ENCODE measurements at regions of chr6 and their contacts with region 1.

Region 1: DNA sequence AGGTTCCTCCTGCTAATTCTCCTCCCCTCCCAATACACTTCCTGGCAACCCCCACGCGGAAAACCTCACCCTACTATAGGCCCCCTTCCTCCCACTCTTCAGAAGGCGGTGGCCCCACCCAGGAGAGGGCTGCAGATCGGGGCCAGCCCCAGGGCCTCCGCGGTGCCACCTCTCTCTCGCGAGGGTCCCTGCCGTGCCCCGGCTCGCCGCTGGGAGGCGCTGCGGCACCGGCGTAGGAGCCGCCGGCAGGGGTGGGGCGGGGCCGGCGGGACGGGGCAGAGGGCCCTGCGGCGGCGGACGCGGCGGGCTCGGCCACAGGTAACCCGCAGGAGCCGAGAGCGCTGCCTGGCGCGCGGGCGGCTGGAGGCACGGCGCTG is at the start of gene ANKRD6:
- DNase-seq: peak in 1 of 2 experiments; percentile 81
- H3K4me3 ChIP-seq: peak within 1 kb of the TSS; percentile 36; the same call in 1 of the 2 replicates
- H3K27ac ChIP-seq: no peak within 1 kb of the TSS
- H3K4me1 ChIP-seq: no peaks in the 10 kb centered on the region
- H3K27me3 ChIP-seq: no peaks in the 10 kb centered on the region
- CTCF ChIP-seq: peak; percentile 72
- total RNA-seq, gene ANKRD6: 1.8 and 2.7 TPM in 2 replicates

Region 2: GRCh38 chr6:89597988-89598692 is 165.3 kb after region 1 on chr6:
- CTCF ChIA-PET with region 1: no interaction called
- POLR2A ChIA-PET with region 1: no interaction called
- intact Hi-C with region 1: loop called (anchors 1 kb)
- DNase-seq: peak; percentile 16 to 67
- H3K4me3 ChIP-seq: no peak overlapping the region
- H3K27ac ChIP-seq: no peak overlapping the region
- H3K4me1 ChIP-seq: no peaks in the 10 kb centered on the region
- H3K27me3 ChIP-seq: no peaks in the 10 kb centered on the region
- CTCF ChIP-seq: peak; percentile 55

Region 3: DNA sequence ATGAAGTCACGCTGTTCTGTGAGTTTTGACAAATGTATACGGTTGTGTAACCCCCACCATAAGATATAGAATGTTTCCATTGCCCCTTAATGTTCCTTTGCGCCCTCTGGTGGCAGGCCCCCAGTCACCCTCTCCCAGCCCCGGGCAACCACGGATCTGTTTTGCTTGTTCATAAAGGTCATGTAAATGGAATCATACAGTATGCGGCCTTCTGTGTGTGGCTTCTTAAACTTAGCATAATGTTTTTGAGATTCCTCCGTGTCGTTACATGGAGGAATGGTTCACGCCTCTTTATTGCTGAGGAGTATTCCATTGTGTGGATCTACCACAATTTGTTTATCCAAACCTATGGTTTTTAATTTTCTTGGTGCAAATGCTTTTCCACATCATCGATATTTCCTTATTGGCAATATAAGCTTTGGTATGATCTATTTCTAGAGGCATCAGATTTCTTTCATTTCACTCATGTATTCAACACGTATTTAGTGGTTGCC is 177.3 kb after region 1 on chr6:
- CTCF ChIA-PET with region 1: interaction called, 12 read pairs
- POLR2A ChIA-PET with region 1: no interaction called
- intact Hi-C with region 1: loop called (anchors 1 kb)
- DNase-seq: peak in 1 of 2 experiments; percentile 50
- H3K4me3 ChIP-seq: no peak overlapping the region
- H3K27ac ChIP-seq: no peak overlapping the region
- H3K4me1 ChIP-seq: no peaks in the 10 kb centered on the region
- H3K27me3 ChIP-seq: no peaks in the 10 kb centered on the region
- CTCF ChIP-seq: peak; percentile 76

Measured in PC-9 (cell line).